Ovary (tissue), 10 donors: ENCODE measurements at regions of chr5 and their contacts with region 1.

Region 1: GRCh38 chr5:134275822-134276221 is 49.9 kb upstream of the PPP2CA start:
- DNase-seq: no peak
- H3K4me3 ChIP-seq: no peak overlapping the region
- H3K27ac ChIP-seq: no peak overlapping the region
- H3K4me1 ChIP-seq: no peaks in the 10 kb centered on the region
- H3K27me3 ChIP-seq: no peaks in the 10 kb centered on the region
- CTCF ChIP-seq: no peak
- EP300 ChIP-seq: no peak
- POLR2A ChIP-seq: no peak

Region 2: GRCh38 chr5:134161513-134162395 is 114.1 kb before region 1 on chr5:
- intact Hi-C with region 1: loop called in 1 of 4 experiments (anchors 1 kb)
- DNase-seq: no peak
- H3K4me3 ChIP-seq: no peak overlapping the region
- H3K27ac ChIP-seq: no peak overlapping the region
- H3K4me1 ChIP-seq: no peaks in the 10 kb centered on the region
- H3K27me3 ChIP-seq: no peaks in the 10 kb centered on the region
- CTCF ChIP-seq: no peak
- EP300 ChIP-seq: no peak
- POLR2A ChIP-seq: no peak